Activated naive CD4-positive, alpha-beta T cell treated with anti-CD3 and anti-CD28 coated beads for 36 hours (primary cell): ENCODE measurements at regions of chr2 and their contacts with region 1.

Region 1: GRCh38 chr2:144198117-144198516 is 321.8 kb downstream of the ZEB2 start:
- DNase-seq: peak; percentile 17
- H3K4me3 Mint-ChIP-seq: no peak overlapping the region
- H3K27ac Mint-ChIP-seq: peak overlapping the region; percentile 86
- H3K4me1 Mint-ChIP-seq: peaks cover 65% of the 10 kb centered on the region
- H3K27me3 Mint-ChIP-seq: no peaks in the 10 kb centered on the region

Region 2: DNA sequence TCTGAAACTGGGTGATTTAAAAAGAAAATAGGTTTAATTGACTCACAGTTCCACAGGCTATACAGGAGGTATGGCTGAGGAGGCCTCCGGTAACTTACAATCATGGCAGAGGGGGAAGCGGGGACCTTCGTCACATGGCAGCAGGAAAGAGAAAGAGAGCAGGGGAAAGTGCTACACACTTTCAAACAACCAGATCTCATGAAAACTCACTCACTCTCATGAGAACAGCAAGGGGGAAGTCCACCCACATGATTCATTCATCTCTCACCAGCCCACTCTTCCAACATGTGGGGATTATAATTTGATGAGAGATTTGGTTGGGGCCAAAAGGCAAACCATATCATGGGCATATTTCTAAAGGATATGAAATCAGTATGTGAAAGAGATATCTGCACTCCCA is 1080.9 kb before region 1 on chr2:
- CTCF ChIA-PET with region 1: no interaction called
- intact Hi-C with region 1: loop called (anchors 5 kb)
- DNase-seq: peak; percentile 60
- H3K4me3 Mint-ChIP-seq: peak overlapping the region; percentile 40
- H3K27ac Mint-ChIP-seq: peak overlapping the region; percentile 39
- H3K4me1 Mint-ChIP-seq: peaks cover 72% of the 10 kb centered on the region
- H3K27me3 Mint-ChIP-seq: no peaks in the 10 kb centered on the region

Region 3: DNA sequence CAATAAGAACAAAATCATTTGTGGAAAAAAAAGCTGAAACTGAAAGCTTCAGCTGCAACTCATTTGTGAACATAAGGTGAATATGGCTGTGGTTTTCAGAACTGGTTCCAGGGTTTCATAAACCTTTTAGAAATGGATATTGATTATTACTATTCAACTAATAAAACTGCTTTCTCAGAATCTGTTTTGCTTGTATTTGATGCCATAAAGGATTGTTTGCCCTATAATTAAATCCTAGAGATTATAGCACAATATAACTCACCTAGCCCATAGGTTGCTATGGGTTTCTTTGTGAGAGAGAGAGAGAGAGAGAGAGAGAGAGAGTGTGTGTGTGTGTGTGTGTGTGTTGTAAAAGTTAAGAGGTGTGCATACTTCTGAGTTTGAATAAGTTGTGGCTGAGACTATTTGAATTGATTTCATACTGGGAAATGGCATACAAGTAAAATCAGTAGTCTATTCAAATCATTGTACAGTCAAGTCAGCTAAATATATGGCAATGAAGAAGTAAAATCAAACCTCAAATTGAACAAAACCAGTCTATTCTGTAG is 729.7 kb before region 1 on chr2:
- CTCF ChIA-PET with region 1: no interaction called
- intact Hi-C with region 1: loop called (anchors 5 kb)
- DNase-seq: no peak
- H3K4me3 Mint-ChIP-seq: peak overlapping the region; percentile 12
- H3K27ac Mint-ChIP-seq: peak overlapping the region; percentile 50
- H3K4me1 Mint-ChIP-seq: peaks cover 28% of the 10 kb centered on the region
- H3K27me3 Mint-ChIP-seq: no peaks in the 10 kb centered on the region

Region 4: DNA sequence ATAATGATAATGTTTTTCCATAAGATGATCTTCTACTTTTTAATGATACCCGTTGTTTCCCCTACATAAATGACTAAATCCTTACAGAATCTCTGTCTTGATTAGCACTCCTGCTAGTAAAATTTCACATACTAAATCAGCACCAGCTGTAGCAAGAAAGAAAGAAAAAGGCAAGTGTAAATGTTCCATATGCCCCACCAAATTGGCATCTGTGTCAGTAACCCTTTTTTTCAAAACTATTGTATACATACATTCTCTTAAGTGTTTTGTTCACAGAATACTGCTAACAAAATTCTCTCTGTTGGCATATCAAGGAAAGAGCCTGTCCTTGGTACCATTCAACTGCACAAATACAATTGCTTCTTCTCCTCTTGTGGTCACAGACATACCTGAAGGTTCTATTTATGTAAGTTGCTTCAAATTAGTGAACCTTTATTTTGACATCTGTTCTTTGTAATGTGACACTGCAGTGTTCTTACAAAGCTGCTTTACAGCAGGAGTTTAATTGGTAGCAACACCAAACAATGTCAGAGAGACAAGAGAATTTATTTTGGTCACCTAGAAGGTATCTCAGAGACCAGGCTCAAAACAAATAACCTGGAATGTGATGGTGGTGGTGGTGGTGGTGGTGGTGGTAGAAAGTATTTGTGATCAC is 320.1 kb before region 1 on chr2:
- CTCF ChIA-PET with region 1: no interaction called
- intact Hi-C with region 1: no loop called
- DNase-seq: no peak
- H3K4me3 Mint-ChIP-seq: no peak overlapping the region
- H3K27ac Mint-ChIP-seq: no peak overlapping the region
- H3K4me1 Mint-ChIP-seq: peaks cover 21% of the 10 kb centered on the region
- H3K27me3 Mint-ChIP-seq: peaks cover 3% of the 10 kb centered on the region

Region 5: DNA sequence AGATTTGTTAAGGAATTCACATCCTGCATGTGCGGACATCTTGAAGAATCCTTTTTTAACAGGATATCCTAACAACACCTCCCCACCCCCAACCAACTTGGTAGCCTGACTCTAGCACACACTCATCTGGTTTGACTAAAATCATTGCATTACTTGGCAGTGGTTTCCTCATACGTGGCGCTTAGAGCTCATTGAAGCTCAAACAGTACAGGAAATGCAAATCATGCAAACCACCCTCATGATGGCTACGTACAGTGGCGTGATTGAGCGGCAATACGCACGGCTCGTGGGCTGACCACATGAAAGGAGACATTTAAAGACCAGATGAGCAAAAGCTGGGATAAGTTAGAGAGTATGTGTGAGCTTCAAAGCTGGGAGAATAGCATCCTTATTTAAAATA is 14.4 kb before region 1 on chr2:
- CTCF ChIA-PET with region 1: interaction called, 5 read pairs
- intact Hi-C with region 1: loop called (anchors 1 kb)
- DNase-seq: peak; percentile 89
- H3K4me3 Mint-ChIP-seq: peak overlapping the region; percentile 52
- H3K27ac Mint-ChIP-seq: peak overlapping the region; percentile 81
- H3K4me1 Mint-ChIP-seq: peaks cover 42% of the 10 kb centered on the region
- H3K27me3 Mint-ChIP-seq: no peaks in the 10 kb centered on the region

Region 6: DNA sequence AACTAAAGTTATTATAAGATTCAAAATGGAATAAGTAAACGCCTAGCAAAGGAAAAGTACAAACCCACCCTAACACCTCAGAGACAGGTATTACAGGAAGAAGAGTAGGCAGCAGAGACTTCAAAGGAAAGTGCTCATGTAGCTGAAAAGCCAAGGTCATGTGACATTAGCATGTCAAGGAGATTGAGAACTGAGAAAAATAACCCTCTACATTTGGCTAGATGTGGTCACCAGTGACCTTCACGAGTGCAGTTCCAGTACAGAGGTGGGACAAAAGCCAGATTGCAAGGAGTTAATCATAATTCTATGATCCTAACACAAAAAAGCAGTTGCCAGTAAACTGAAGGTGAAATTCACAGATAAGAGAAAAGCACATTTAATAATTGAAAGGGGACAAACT is 69.1 kb after region 1 on chr2:
- CTCF ChIA-PET with region 1: interaction called, 3 read pairs
- intact Hi-C with region 1: loop called (anchors 2 kb)
- DNase-seq: peak; percentile 19
- H3K4me3 Mint-ChIP-seq: no peak overlapping the region
- H3K27ac Mint-ChIP-seq: no peak overlapping the region
- H3K4me1 Mint-ChIP-seq: peaks cover 22% of the 10 kb centered on the region
- H3K27me3 Mint-ChIP-seq: no peaks in the 10 kb centered on the region

Region 7: DNA sequence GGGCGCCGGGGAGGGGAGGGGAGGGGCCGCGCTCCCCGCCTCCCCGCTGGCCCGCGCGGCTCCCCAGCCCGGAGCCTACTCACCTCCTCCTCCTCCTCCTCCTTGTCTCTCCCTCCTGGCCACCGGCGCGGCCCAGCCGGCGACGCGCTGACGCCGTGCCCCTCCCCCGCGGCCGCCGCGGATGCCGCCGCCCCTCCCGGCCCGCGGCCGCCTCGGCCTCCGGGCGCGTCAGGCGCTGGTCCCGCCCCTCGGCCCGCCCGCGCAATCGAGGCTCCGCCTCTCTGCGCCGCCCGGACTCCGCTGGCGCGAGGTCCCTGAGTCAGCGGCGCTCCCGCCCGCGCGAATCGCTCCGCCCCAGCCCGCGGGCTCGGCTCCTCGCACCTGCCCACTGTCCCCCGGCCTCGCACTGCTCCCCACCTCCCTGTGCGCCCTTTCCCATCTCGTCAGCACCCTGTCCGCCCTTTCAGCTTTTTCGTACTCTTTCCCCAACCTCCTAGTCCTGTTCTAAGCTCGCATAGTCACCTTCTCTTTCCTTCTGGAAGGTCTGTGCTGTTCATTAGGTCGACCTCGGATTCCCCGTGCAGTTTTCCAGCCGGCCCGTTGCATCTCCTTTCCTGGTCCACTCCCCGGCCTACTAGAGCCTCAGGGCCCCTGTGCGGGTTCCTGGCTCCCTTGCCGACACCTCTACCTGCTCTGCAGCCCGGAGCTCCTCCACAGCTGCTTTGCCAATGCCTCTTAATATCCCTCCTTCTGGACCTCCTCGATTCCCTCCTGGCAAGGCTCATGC is 134.4 kb after region 1 on chr2:
- CTCF ChIA-PET with region 1: no interaction called
- intact Hi-C with region 1: loop called (anchors 2 kb)
- DNase-seq: peak; percentile 83
- H3K4me3 Mint-ChIP-seq: peak overlapping the region; percentile 79
- H3K27ac Mint-ChIP-seq: peak overlapping the region; percentile 78
- H3K4me1 Mint-ChIP-seq: peaks cover 19% of the 10 kb centered on the region
- H3K27me3 Mint-ChIP-seq: no peaks in the 10 kb centered on the region

Region 8: GRCh38 chr2:144596073-144596871 is 398.2 kb after region 1 on chr2:
- CTCF ChIA-PET with region 1: no interaction called
- intact Hi-C with region 1: no loop called
- DNase-seq: no peak
- H3K4me3 Mint-ChIP-seq: no peak overlapping the region
- H3K27ac Mint-ChIP-seq: no peak overlapping the region
- H3K4me1 Mint-ChIP-seq: no peaks in the 10 kb centered on the region
- H3K27me3 Mint-ChIP-seq: peaks cover 8% of the 10 kb centered on the region